ENCODE measurements at regions of chr1 and their contacts with region 1.

Region 1: GRCh38 chr1:59759156-59759925 is 55.4 kb upstream of the HOOK1 start:
- DNase-seq: peak; percentile 61 to 82
- ATAC-seq: peak; percentile 84 to 99 (median 97)
- H3K4me3 ChIP-seq: no peak overlapping the region
- H3K4me3 Mint-ChIP-seq: no peak overlapping the region
- H3K27ac ChIP-seq: no peak overlapping the region
- H3K27ac Mint-ChIP-seq: no peak overlapping the region
- H3K4me1 ChIP-seq: peaks cover 5% of the 10 kb centered on the region
- H3K4me1 Mint-ChIP-seq: peaks cover 0 to 11% of the 10 kb centered on the region in 2 donors
- H3K27me3 ChIP-seq: no peaks in the 10 kb centered on the region
- H3K27me3 Mint-ChIP-seq: peaks cover 0 to 2% of the 10 kb centered on the region in 2 donors
- CTCF ChIP-seq: peak; percentile 94

Region 2: GRCh38 chr1:58515794-58516401 is 1243.4 kb before region 1 on chr1:
- intact Hi-C with region 1: loop called (anchors 5 kb)
- DNase-seq: peak in 1 of 2 donors; percentile 84
- ATAC-seq: peak; percentile 61 to 73 (median 70)
- H3K4me3 ChIP-seq: no peak overlapping the region
- H3K4me3 Mint-ChIP-seq: no peak overlapping the region
- H3K27ac ChIP-seq: no peak overlapping the region
- H3K27ac Mint-ChIP-seq: peak overlapping the region in 1 of 2 donors; percentile 79
- H3K4me1 ChIP-seq: no peaks in the 10 kb centered on the region
- H3K4me1 Mint-ChIP-seq: peaks cover 0 to 7% of the 10 kb centered on the region in 2 donors
- H3K27me3 ChIP-seq: no peaks in the 10 kb centered on the region
- H3K27me3 Mint-ChIP-seq: no peaks in the 10 kb centered on the region
- CTCF ChIP-seq: peak; percentile 83

Region 3: GRCh38 chr1:58652651-58653184 is 1106.6 kb before region 1 on chr1:
- intact Hi-C with region 1: loop called (anchors 2 kb)
- DNase-seq: peak; percentile 27 to 87
- ATAC-seq: peak; percentile 93 to 94 (median 94)
- H3K4me3 ChIP-seq: no peak overlapping the region
- H3K4me3 Mint-ChIP-seq: no peak overlapping the region
- H3K27ac ChIP-seq: no peak overlapping the region
- H3K27ac Mint-ChIP-seq: peak overlapping the region in 1 of 2 donors; percentile 43
- H3K4me1 ChIP-seq: peaks cover 9% of the 10 kb centered on the region
- H3K4me1 Mint-ChIP-seq: peaks cover 32 to 34% of the 10 kb centered on the region in 2 donors
- H3K27me3 ChIP-seq: no peaks in the 10 kb centered on the region
- H3K27me3 Mint-ChIP-seq: no peaks in the 10 kb centered on the region
- CTCF ChIP-seq: peak; percentile 82

Region 4: GRCh38 chr1:58739856-58740466 is 1019.4 kb before region 1 on chr1:
- intact Hi-C with region 1: loop called (anchors 2 kb)
- DNase-seq: peak in 1 of 2 donors; percentile 81
- ATAC-seq: peak; percentile 57 to 69 (median 58)
- H3K4me3 ChIP-seq: no peak overlapping the region
- H3K4me3 Mint-ChIP-seq: no peak overlapping the region
- H3K27ac ChIP-seq: no peak overlapping the region
- H3K27ac Mint-ChIP-seq: no peak overlapping the region
- H3K4me1 ChIP-seq: no peaks in the 10 kb centered on the region
- H3K4me1 Mint-ChIP-seq: peaks cover 9 to 25% of the 10 kb centered on the region in 2 donors
- H3K27me3 ChIP-seq: no peaks in the 10 kb centered on the region
- H3K27me3 Mint-ChIP-seq: no peaks in the 10 kb centered on the region
- CTCF ChIP-seq: peak; percentile 94

Region 5: GRCh38 chr1:59150577-59151391 is 608.6 kb before region 1 on chr1:
- intact Hi-C with region 1: no loop called
- DNase-seq: peak in 1 of 2 donors; percentile 28
- ATAC-seq: peak in 1 of 3 donors; percentile 8
- H3K4me3 ChIP-seq: no peak overlapping the region
- H3K4me3 Mint-ChIP-seq: no peak overlapping the region
- H3K27ac ChIP-seq: no peak overlapping the region
- H3K27ac Mint-ChIP-seq: peak overlapping the region in 1 of 2 donors; percentile 71
- H3K4me1 ChIP-seq: peaks cover 14% of the 10 kb centered on the region
- H3K4me1 Mint-ChIP-seq: peaks cover 21 to 23% of the 10 kb centered on the region in 2 donors
- H3K27me3 ChIP-seq: no peaks in the 10 kb centered on the region
- H3K27me3 Mint-ChIP-seq: no peaks in the 10 kb centered on the region
- CTCF ChIP-seq: no peak

Region 6: GRCh38 chr1:59408608-59409240 is 350.6 kb before region 1 on chr1:
- intact Hi-C with region 1: no loop called
- DNase-seq: no peak
- ATAC-seq: no peak
- H3K4me3 ChIP-seq: no peak overlapping the region
- H3K4me3 Mint-ChIP-seq: no peak overlapping the region
- H3K27ac ChIP-seq: no peak overlapping the region
- H3K27ac Mint-ChIP-seq: no peak overlapping the region
- H3K4me1 ChIP-seq: no peaks in the 10 kb centered on the region
- H3K4me1 Mint-ChIP-seq: no peaks in the 10 kb centered on the region
- H3K27me3 ChIP-seq: no peaks in the 10 kb centered on the region
- H3K27me3 Mint-ChIP-seq: no peaks in the 10 kb centered on the region
- CTCF ChIP-seq: no peak

Region 7: GRCh38 chr1:59699227-59699847 is 60.0 kb before region 1 on chr1:
- intact Hi-C with region 1: loop called (anchors 2 kb)
- DNase-seq: peak in 1 of 2 donors; percentile 74
- ATAC-seq: peak; percentile 68 to 78 (median 76)
- H3K4me3 ChIP-seq: no peak overlapping the region
- H3K4me3 Mint-ChIP-seq: peak overlapping the region; percentile 43
- H3K27ac ChIP-seq: no peak overlapping the region
- H3K27ac Mint-ChIP-seq: no peak overlapping the region
- H3K4me1 ChIP-seq: peaks cover 5% of the 10 kb centered on the region
- H3K4me1 Mint-ChIP-seq: peaks cover 20 to 23% of the 10 kb centered on the region in 2 donors
- H3K27me3 ChIP-seq: no peaks in the 10 kb centered on the region
- H3K27me3 Mint-ChIP-seq: no peaks in the 10 kb centered on the region
- CTCF ChIP-seq: peak; percentile 100